IMR-90 (cell line): ENCODE measurements at regions of chr3 and their contacts with region 1.

Region 1: GRCh38 chr3:82938821-82939328 is 1177.4 kb upstream of the GBE1 start:
- DNase-seq: no peak
- ATAC-seq: no peak
- H3K4me3 ChIP-seq: no peak overlapping the region
- H3K27ac ChIP-seq: no peak overlapping the region
- H3K4me1 ChIP-seq: no peaks in the 10 kb centered on the region
- H3K27me3 ChIP-seq: no peaks in the 10 kb centered on the region
- CTCF ChIP-seq: no peak
- POLR2A ChIP-seq: no peak
- RAD21 ChIP-seq: no peak

Region 2: GRCh38 chr3:82783194-82783593 is 155.7 kb before region 1 on chr3:
- CTCF ChIA-PET with region 1: no interaction called
- POLR2A ChIA-PET with region 1: no interaction called
- dilution Hi-C with region 1: no loop called
- in situ Hi-C with region 1: no loop called
- intact Hi-C with region 1: loop called (anchors 10 kb)
- DNase-seq: no peak
- ATAC-seq: no peak
- H3K4me3 ChIP-seq: no peak overlapping the region
- H3K27ac ChIP-seq: no peak overlapping the region
- H3K4me1 ChIP-seq: no peaks in the 10 kb centered on the region
- H3K27me3 ChIP-seq: no peaks in the 10 kb centered on the region
- CTCF ChIP-seq: no peak
- POLR2A ChIP-seq: no peak
- RAD21 ChIP-seq: no peak

Region 3: GRCh38 chr3:83193526-83193925 is 254.7 kb after region 1 on chr3:
- CTCF ChIA-PET with region 1: no interaction called
- POLR2A ChIA-PET with region 1: no interaction called
- dilution Hi-C with region 1: no loop called
- in situ Hi-C with region 1: no loop called
- intact Hi-C with region 1: no loop called
- DNase-seq: no peak
- ATAC-seq: no peak
- H3K4me3 ChIP-seq: no peak overlapping the region
- H3K27ac ChIP-seq: no peak overlapping the region
- H3K4me1 ChIP-seq: no peaks in the 10 kb centered on the region
- H3K27me3 ChIP-seq: no peaks in the 10 kb centered on the region
- CTCF ChIP-seq: no peak
- POLR2A ChIP-seq: no peak
- RAD21 ChIP-seq: no peak